GM13977 (cell line): ENCODE measurements at regions of chr11 and their contacts with region 1.

Region 1: DNA sequence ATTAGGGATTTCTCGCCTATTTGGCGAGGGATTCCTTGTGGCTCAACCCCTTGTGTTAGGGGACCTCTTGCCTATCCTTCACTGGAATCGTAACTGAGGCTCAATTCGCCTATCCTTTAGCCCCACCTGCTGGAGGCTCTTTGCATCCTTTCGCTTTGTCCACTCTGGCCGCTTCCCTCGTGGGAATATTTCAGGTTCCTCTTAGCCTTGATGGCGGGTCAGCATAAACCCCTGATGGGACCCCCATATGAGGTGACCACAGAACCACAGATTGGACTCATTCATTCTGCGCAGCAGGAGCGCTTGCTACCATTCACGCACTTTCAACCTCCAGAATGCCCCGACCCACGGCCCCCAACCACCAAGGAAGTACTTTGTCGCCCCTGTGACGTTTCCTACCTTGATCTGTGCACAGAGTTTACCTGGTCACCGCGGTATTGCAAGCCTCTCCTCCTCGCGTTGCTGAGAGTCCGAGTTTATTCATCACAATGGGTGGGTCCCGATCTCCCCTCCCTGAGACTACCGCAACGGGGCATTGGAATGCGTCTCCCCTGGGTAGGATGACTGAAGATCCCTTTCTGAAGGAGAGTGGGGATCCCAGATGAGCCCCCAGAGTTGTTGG is at the start of gene OR52N2:
- DNase-seq: peak; percentile 19
- CTCF ChIP-seq: peak; percentile 84

Region 2: GRCh38 chr11:5476184-5476819 is 332.3 kb before region 1 on chr11:
- in situ Hi-C with region 1: loop called (anchors 25 kb)
- DNase-seq: peak; percentile 72
- CTCF ChIP-seq: peak; percentile 79